ENCODE measurements at regions of chr17 and their contacts with region 1.

Region 1: GRCh38 chr17:27601069-27601975 is 29.7 kb upstream of the LGALS9 start:
- DNase-seq: peak; percentile 90
- ATAC-seq: peak; percentile 40
- H3K4me3 Mint-ChIP-seq: no peak overlapping the region
- H3K27ac Mint-ChIP-seq: no peak overlapping the region
- H3K4me1 Mint-ChIP-seq: peaks cover 14% of the 10 kb centered on the region
- H3K27me3 Mint-ChIP-seq: no peaks in the 10 kb centered on the region

Region 2: DNA sequence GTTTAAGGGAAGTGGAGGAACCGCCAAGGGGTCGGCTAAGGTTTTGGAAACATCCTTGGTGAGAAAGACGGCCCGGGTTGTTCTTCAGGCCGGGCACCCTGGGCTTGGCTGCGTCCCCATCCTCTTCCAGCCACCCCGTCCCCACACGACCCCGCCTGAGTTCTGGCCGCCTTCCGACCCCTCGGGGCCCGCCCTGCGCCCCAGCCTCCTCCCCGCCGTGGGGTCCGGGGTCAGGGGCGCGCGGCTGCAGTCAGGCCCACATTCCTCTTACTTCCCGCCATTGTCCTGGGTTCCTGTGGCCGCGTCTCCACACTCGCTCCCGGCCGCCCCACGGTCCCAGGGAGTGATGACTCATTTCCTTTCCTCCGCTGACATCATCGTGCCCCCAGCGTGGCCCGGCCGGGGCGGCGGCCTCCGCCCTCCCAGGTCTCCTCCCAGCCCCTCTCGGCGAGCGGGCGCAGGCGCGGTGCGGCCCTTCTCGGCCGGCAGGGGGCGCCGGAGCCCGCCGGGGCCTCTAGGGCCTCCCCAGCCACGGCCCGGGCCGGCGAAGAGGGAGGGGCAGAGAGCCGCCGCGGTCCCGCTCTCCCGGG is 247.8 kb before region 1 on chr17:
- CTCF ChIA-PET with region 1: interaction called, 16 read pairs
- POLR2A ChIA-PET with region 1: no interaction called
- intact Hi-C with region 1: loop called (anchors 1 kb)
- DNase-seq: peak; percentile 94
- ATAC-seq: peak; percentile 90
- H3K4me3 Mint-ChIP-seq: peak overlapping the region; percentile 85
- H3K27ac Mint-ChIP-seq: peak overlapping the region; percentile 95
- H3K4me1 Mint-ChIP-seq: peaks cover 25% of the 10 kb centered on the region
- H3K27me3 Mint-ChIP-seq: no peaks in the 10 kb centered on the region

Region 3: DNA sequence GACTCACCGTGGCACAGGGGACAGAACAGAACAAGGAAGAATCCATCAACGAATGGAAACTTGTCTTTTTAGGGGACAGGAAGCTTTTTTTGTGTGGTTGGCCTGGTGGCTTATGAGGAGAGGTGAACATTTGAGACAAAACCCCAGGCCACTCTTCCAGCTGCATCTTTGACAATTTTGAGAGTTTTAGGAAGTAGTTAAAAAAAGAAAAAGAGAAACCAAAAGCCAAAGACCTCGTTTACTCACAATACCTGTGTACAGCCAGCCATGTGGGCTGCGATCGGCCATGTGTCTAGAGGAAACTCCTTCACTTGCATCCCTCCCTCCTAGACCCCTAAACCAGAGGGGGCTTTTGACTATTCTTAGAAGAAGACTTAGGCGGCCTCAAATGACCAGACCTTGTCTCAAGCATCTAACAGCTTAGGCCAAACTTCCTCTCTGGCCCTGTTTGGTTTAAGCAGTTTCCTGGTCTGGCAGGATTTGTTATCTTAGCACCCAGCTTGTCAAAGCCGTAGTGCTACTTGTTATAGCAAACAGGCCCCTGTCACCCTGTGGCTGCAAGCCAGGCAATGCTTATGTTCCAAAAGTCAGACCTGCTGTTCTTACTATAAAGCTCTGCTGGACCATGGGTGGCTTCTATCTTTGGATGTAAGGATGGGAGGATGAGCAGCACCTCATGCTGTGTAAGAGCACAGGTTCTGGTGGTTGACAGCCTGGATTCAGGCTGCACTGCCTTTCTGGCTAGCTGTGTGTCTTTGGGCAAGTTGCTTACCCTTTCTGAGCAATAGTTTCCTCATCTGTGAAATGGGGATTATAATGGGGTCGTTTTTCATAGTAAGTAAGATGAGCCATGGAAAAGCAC is 127.3 kb before region 1 on chr17:
- CTCF ChIA-PET with region 1: interaction called, 9 read pairs
- POLR2A ChIA-PET with region 1: interaction called, 16 read pairs
- intact Hi-C with region 1: loop called (anchors 2 to 5 kb)
- DNase-seq: peak; percentile 93
- ATAC-seq: peak; percentile 25
- H3K4me3 Mint-ChIP-seq: peak overlapping the region; percentile 50
- H3K27ac Mint-ChIP-seq: peak overlapping the region; percentile 98
- H3K4me1 Mint-ChIP-seq: peaks cover 94% of the 10 kb centered on the region
- H3K27me3 Mint-ChIP-seq: no peaks in the 10 kb centered on the region

Region 4: GRCh38 chr17:27544350-27545131 is 56.8 kb before region 1 on chr17:
- CTCF ChIA-PET with region 1: interaction called, 12 read pairs
- POLR2A ChIA-PET with region 1: interaction called, 9 read pairs
- intact Hi-C with region 1: loop called in 1 of 2 experiments (anchors 1 kb)
- DNase-seq: peak; percentile 89
- ATAC-seq: peak; percentile 83
- H3K4me3 Mint-ChIP-seq: peak overlapping the region; percentile 62
- H3K27ac Mint-ChIP-seq: peak overlapping the region; percentile 93
- H3K4me1 Mint-ChIP-seq: peaks cover 80% of the 10 kb centered on the region
- H3K27me3 Mint-ChIP-seq: no peaks in the 10 kb centered on the region

Region 5: DNA sequence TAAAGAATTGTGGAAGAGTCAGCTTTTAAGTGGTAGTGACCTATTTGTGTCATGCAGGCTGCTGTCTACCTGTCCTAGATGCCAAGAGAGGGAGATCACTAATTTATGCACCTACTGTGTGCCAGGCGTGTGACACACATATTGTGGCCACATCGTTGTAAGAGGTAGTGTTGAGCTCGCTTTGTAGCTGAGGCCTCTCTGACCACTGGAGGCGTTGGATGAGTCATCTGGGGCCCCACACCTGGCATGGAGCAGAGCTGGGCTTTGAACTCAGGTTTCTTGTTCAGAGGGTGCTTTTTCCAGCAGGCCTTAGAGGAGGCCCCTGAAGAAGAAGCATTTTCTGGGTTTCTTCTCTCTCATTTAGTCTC is 22.6 kb before region 1 on chr17:
- CTCF ChIA-PET with region 1: interaction called, 32 read pairs
- POLR2A ChIA-PET with region 1: interaction called, 3 read pairs
- intact Hi-C with region 1: no loop called
- DNase-seq: peak; percentile 87
- ATAC-seq: peak; percentile 78
- H3K4me3 Mint-ChIP-seq: peak overlapping the region; percentile 27
- H3K27ac Mint-ChIP-seq: peak overlapping the region; percentile 91
- H3K4me1 Mint-ChIP-seq: peaks cover 73% of the 10 kb centered on the region
- H3K27me3 Mint-ChIP-seq: no peaks in the 10 kb centered on the region